Activated CD4-positive, alpha-beta memory T cell treated with anti-CD3 and anti-CD28 coated beads for 36 hours (primary cell): ENCODE measurements at regions of chr1 and their contacts with region 1.

Region 1: GRCh38 chr1:205591522-205592351 is 40.1 kb downstream of the ELK4 start:
- DNase-seq: peak; percentile 94
- H3K4me3 Mint-ChIP-seq: peak overlapping the region; percentile 77
- H3K27ac Mint-ChIP-seq: peak overlapping the region; percentile 79
- H3K4me1 Mint-ChIP-seq: peaks cover 29% of the 10 kb centered on the region
- H3K27me3 Mint-ChIP-seq: no peaks in the 10 kb centered on the region

Region 2: GRCh38 chr1:205528887-205529825 is 62.6 kb before region 1 on chr1:
- CTCF ChIA-PET with region 1: interaction called, 35 read pairs
- POLR2A ChIA-PET with region 1: no interaction called
- intact Hi-C with region 1: loop called (anchors 5 kb)
- DNase-seq: peak; percentile 85
- H3K4me3 Mint-ChIP-seq: peak overlapping the region; percentile 37
- H3K27ac Mint-ChIP-seq: no peak overlapping the region
- H3K4me1 Mint-ChIP-seq: peaks cover 4% of the 10 kb centered on the region
- H3K27me3 Mint-ChIP-seq: peaks cover 7% of the 10 kb centered on the region

Region 3: DNA sequence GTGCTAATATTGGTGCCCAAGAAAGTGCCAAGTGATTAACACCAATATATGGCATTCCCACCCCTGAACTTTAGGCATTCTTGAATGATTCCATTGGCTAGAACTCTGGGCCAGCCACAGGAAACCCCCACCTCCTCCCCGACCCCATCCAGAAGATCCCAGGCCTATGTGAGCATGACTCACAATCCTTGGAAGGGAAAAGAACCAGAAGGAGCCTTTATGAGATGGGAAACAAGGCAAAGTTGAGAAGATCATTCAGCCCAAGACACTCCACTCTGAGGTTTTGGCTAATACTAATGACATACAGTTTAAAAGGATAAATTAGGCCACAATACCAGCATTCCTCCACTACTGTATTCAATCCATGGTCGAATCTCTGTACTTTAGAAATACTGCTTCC is 18.3 kb after region 1 on chr1:
- CTCF ChIA-PET with region 1: interaction called, 17 read pairs
- POLR2A ChIA-PET with region 1: interaction called, 4 read pairs
- intact Hi-C with region 1: no loop called
- DNase-seq: no peak
- H3K4me3 Mint-ChIP-seq: no peak overlapping the region
- H3K27ac Mint-ChIP-seq: no peak overlapping the region
- H3K4me1 Mint-ChIP-seq: peaks cover 44% of the 10 kb centered on the region
- H3K27me3 Mint-ChIP-seq: no peaks in the 10 kb centered on the region

Region 4: GRCh38 chr1:205631727-205632373 is 40.1 kb after region 1 on chr1 and contains the start of gene ELK4:
- CTCF ChIA-PET with region 1: interaction called, 316 read pairs
- POLR2A ChIA-PET with region 1: interaction called, 78 read pairs
- intact Hi-C with region 1: loop called (anchors 1 kb)
- DNase-seq: peak; percentile 100
- H3K4me3 Mint-ChIP-seq: peak within 1 kb of the TSS; percentile 85
- H3K27ac Mint-ChIP-seq: peak within 1 kb of the TSS; percentile 90
- H3K4me1 Mint-ChIP-seq: peaks cover 34% of the 10 kb centered on the region
- H3K27me3 Mint-ChIP-seq: no peaks in the 10 kb centered on the region
- total RNA-seq, gene ELK4: 60.7 to 65.8 TPM

Region 5: DNA sequence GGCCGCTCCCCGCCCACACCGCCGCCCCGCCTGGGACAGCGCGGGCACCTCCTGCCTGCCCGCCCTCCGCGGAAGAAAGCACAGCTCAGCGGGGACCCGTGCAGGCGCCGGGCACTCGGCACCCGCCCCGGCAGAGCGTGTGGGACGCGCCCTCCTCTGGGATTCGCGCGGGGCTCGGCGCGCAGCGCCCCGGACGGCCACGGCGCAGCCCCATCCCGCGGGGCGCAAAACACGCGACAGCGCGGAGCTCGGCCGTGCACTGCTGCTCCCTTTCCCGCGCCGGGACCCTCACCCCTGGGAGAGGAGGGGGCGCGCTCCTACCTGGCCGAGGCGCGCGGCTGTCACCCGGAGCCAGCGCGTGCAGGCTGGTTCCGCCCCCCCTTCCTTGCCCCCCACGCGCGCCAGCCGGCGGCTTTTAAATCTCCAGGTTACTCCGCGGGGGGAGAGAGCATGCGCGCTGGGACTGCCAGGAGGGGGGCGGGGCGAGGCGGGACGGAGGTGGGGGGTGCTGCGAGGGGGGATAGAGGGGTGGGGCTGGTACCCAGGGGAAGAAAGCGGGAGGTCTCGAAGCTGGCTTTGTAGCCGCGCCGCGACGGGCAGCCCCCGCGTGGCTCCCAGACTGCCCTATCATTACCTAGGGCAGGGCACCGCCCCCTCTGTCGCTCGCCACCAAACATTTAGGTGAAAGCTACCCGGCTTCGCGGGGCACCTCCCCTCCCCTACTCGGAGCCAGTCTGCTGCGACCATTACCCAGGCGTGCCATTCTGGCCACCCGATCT is 88.5 kb after region 1 on chr1 and contains the start of gene SLC45A3:
- CTCF ChIA-PET with region 1: interaction called, 20 read pairs
- POLR2A ChIA-PET with region 1: interaction called, 3 read pairs
- intact Hi-C with region 1: no loop called
- DNase-seq: peak; percentile 40
- H3K4me3 Mint-ChIP-seq: peak within 1 kb of the TSS; percentile 72
- H3K27ac Mint-ChIP-seq: no peak within 1 kb of the TSS
- H3K4me1 Mint-ChIP-seq: peaks cover 10% of the 10 kb centered on the region
- H3K27me3 Mint-ChIP-seq: peaks cover 13% of the 10 kb centered on the region
- total RNA-seq, gene SLC45A3: 0.55 to 0.56 TPM

Region 6: GRCh38 chr1:205750138-205751035 is 158.7 kb after region 1 on chr1 and contains the start of gene NUCKS1:
- CTCF ChIA-PET with region 1: interaction called, 10 read pairs
- POLR2A ChIA-PET with region 1: no interaction called
- intact Hi-C with region 1: no loop called
- DNase-seq: peak; percentile 98
- H3K4me3 Mint-ChIP-seq: peak within 1 kb of the TSS; percentile 93
- H3K27ac Mint-ChIP-seq: peak within 1 kb of the TSS; percentile 99
- H3K4me1 Mint-ChIP-seq: peaks cover 30% of the 10 kb centered on the region
- H3K27me3 Mint-ChIP-seq: peaks cover 1% of the 10 kb centered on the region
- total RNA-seq, gene NUCKS1: 149 to 202 TPM